PC-3 (cell line): ENCODE measurements at regions of chr18 and their contacts with region 1.

Region 1: GRCh38 chr18:2932247-2933181 is 80.4 kb downstream of the LPIN2 start:
- DNase-seq: peak; percentile 87
- ATAC-seq: peak; percentile 61
- H3K4me3 ChIP-seq: no peak overlapping the region
- H3K27ac ChIP-seq: no peak overlapping the region
- H3K4me1 ChIP-seq: no peaks in the 10 kb centered on the region
- H3K27me3 ChIP-seq: no peaks in the 10 kb centered on the region
- CTCF ChIP-seq: peak; percentile 89

Region 2: GRCh38 chr18:2985628-2986027 is 53.1 kb after region 1 on chr18:
- CTCF ChIA-PET with region 1: no interaction called
- POLR2A ChIA-PET with region 1: no interaction called
- intact Hi-C with region 1: loop called (anchors 2 kb)
- DNase-seq: peak; percentile 56
- ATAC-seq: no peak
- H3K4me3 ChIP-seq: no peak overlapping the region
- H3K27ac ChIP-seq: no peak overlapping the region
- H3K4me1 ChIP-seq: peaks cover 33% of the 10 kb centered on the region
- H3K27me3 ChIP-seq: no peaks in the 10 kb centered on the region
- CTCF ChIP-seq: peak; percentile 79

Region 3: GRCh38 chr18:3012964-3013804 is 80.7 kb after region 1 on chr18 and contains the start of gene LPIN2:
- CTCF ChIA-PET with region 1: interaction called, 4 read pairs
- POLR2A ChIA-PET with region 1: no interaction called
- intact Hi-C with region 1: loop called (anchors 5 kb)
- DNase-seq: peak; percentile 99
- ATAC-seq: peak; percentile 70
- H3K4me3 ChIP-seq: peak within 1 kb of the TSS; percentile 84
- H3K27ac ChIP-seq: no peak within 1 kb of the TSS
- H3K4me1 ChIP-seq: peaks cover 39% of the 10 kb centered on the region
- H3K27me3 ChIP-seq: no peaks in the 10 kb centered on the region
- CTCF ChIP-seq: no peak
- total RNA-seq, gene LPIN2: 9.8 and 10.7 TPM in 2 replicates

Region 4: DNA sequence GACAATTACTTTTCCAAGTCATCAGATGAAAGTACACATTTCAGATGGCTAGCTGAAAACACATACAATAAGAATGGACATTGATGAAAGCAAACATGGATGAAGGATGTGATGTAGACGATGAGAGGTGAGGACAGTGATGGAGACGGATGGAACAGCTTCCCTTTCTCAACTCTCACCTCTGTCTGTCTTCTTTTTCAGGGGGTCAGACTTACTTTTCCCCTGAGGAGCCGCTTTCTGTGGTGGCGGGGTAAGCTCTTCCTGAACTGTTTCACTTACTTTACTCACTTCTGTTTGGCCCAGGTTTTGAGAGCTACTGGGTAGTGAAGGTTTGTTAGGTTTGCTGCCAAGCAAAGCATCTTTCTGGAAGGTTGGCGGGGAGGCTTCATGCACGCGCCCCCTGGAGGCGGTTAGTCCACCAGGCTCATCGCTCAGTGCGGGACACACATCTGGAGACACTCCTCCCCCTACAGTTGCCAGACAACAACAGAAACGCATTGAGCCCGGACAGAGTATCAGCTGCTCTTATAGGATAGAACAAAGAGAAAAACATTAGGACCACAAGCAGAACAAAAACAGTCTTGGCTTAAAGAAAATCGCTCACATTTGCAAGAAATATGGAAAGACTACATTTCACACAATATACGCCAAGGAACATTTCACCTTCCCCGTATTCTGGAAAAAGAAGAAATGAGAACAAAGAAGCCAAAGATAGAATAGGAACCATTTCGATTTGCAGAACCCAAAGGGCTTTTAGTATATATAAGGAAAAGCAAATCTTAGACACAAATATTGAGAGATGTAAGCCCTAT is 196.7 kb after region 1 on chr18:
- CTCF ChIA-PET with region 1: interaction called, 9 read pairs
- POLR2A ChIA-PET with region 1: no interaction called
- intact Hi-C with region 1: loop called (anchors 1 kb)
- DNase-seq: peak; percentile 81
- ATAC-seq: peak; percentile 100
- H3K4me3 ChIP-seq: no peak overlapping the region
- H3K27ac ChIP-seq: no peak overlapping the region
- H3K4me1 ChIP-seq: no peaks in the 10 kb centered on the region
- H3K27me3 ChIP-seq: no peaks in the 10 kb centered on the region
- CTCF ChIP-seq: peak; percentile 96

Region 5: DNA sequence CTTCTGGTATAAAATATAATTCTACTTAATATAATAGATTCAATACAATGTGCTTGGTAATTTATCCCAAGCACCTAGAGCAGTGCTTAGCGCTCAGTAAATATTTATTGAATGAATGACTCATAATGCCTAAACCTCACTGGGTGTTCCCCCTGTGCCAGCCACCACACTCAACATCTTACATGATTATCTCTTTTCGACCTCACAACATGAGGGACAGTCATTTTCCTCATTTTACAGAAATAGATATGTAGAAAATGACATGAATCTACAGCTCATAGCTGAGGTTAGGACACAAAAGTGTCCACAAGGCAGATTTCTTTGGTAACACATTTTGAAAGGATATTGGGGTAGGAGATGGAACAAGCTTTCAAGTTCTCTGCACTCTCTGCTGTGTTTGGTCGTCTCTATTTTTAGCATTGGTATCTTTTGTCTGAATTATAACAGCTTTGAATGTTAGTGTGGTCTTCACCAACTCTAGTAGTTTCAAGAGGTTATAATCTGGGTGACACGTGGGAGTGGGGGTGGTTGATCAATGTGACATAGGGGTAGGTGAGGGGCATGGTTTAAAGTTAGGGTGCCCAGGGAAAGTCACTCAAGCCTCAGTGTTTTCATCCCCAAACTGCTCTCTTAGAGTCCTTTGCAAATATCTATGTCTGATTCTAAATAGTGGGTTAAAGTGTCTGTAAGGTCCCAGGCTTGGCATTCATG is 277.5 kb after region 1 on chr18:
- CTCF ChIA-PET with region 1: interaction called, 13 read pairs
- POLR2A ChIA-PET with region 1: no interaction called
- intact Hi-C with region 1: no loop called
- DNase-seq: peak; percentile 71
- ATAC-seq: peak; percentile 83
- H3K4me3 ChIP-seq: no peak overlapping the region
- H3K27ac ChIP-seq: peak overlapping the region; percentile 47
- H3K4me1 ChIP-seq: peaks cover 41% of the 10 kb centered on the region
- H3K27me3 ChIP-seq: no peaks in the 10 kb centered on the region
- CTCF ChIP-seq: no peak